ENCODE measurements at regions of chr2 and their contacts with region 1.

Region 1: GRCh38 chr2:55168221-55169154 is 63.6 kb downstream of the CLHC1 start:
- ATAC-seq: peak; percentile 59 to 87 (median 71)
- H3K4me3 ChIP-seq: no peak overlapping the region
- H3K27ac ChIP-seq: no peak overlapping the region
- H3K4me1 ChIP-seq: peaks cover 36 to 44% of the 10 kb centered on the region in 2 donors

Region 2: GRCh38 chr2:54741250-54741649 is 427.2 kb before region 1 on chr2:
- in situ Hi-C with region 1: no loop called
- ATAC-seq: no peak
- H3K4me3 ChIP-seq: no peak overlapping the region
- H3K27ac ChIP-seq: no peak overlapping the region
- H3K4me1 ChIP-seq: no peaks in the 10 kb centered on the region

Region 3: GRCh38 chr2:55033066-55033742 is 135.3 kb before region 1 on chr2:
- in situ Hi-C with region 1: loop called in 3 of 9 experiments (anchors 10 to 25 kb)
- ATAC-seq: no peak
- H3K4me3 ChIP-seq: no peak overlapping the region
- H3K27ac ChIP-seq: no peak overlapping the region
- H3K4me1 ChIP-seq: peaks cover 0 to 9% of the 10 kb centered on the region in 2 donors

Region 4: DNA sequence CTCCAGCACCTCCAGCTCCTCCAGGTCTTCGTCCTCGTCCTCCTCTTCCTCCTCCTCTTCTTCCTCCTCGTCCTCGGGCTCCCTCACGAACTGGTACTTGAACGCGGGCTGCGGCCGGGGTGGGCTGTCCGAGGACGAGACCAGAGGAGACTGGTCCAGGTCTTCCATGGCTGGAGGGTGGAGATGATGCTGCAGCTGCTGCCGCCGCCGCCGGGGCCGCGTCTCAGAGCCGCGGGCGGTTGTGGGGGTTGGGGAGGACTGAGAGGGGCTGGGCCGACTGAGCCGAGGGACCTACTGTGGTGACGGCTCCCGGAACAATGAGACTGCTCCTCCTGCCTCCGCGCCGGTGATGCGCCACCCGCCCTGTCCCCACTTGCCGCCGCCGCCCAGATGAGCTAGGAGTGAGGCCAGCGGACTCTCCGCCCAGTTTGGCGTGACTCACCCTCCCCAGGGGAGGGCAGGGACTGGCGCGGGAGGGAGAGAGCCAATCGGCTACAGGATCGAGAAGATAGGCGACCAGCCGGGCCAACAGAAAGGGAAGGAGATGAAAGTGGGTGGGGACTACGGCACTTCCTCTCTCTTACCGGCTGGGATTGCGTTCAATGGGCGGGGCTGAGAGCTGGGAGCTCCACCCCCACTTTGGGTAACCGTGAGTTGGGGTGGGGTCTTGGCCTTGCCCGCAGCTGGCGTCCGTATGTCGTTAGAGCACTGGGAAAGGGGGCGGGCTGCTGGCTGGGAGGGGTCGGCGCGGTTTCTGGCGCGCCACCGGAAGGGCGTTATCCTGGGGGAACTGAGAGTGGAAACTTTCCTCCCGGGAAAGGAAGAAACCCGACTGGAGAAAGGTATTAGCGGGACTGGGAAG is 118.1 kb before region 1 on chr2 and contains the start of gene RTN4:
- in situ Hi-C with region 1: loop called in 5 of 9 experiments (anchors 5 to 25 kb)
- ATAC-seq: peak; percentile 72 to 89 (median 86)
- H3K4me3 ChIP-seq: peak within 1 kb of the TSS; percentile 73 to 99 (median 86)
- H3K27ac ChIP-seq: peak within 1 kb of the TSS; percentile 93 to 94
- H3K4me1 ChIP-seq: peaks cover 14 to 20% of the 10 kb centered on the region in 2 donors
- total RNA-seq, gene RTN4: 131 to 519 (median 248) TPM

Region 5: DNA sequence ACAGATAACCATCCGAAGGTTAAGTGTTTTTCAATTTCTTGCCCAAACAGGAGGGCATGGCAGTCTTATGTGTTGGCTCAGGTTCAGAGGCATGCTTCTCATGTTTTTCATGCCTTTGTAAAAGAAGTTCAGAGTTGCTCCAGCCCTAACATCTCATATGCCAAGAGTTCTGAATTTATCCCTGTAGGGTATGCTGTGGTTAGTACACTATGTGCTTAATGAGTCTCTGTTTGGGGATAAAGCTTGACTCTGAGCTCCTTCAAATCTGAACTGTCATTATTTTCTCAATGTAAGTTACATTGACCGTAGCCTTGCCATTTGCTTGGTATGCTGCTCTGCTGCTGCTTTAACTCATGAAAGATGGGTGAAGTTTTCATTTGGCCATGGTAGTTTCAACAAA is 593.0 kb after region 1 on chr2:
- in situ Hi-C with region 1: no loop called
- ATAC-seq: peak in 3 of 8 experiments; percentile 45 to 61 (median 46)
- H3K4me3 ChIP-seq: no peak overlapping the region
- H3K27ac ChIP-seq: no peak overlapping the region
- H3K4me1 ChIP-seq: no peaks in the 10 kb centered on the region